Heart right ventricle (tissue), 16 donors: ENCODE measurements at regions of chr9 and their contacts with region 1.

Region 1: GRCh38 chr9:20832775-20833174 is 148.7 kb downstream of the FOCAD start:
- DNase-seq: no peak
- ATAC-seq: no peak
- H3K4me3 ChIP-seq: no peak overlapping the region
- H3K27ac ChIP-seq: no peak overlapping the region
- H3K4me1 ChIP-seq: peaks cover 0 to 12% (median 0%) of the 10 kb centered on the region in 9 donors
- H3K27me3 ChIP-seq: no peaks in the 10 kb centered on the region
- CTCF ChIP-seq: no peak

Region 2: DNA sequence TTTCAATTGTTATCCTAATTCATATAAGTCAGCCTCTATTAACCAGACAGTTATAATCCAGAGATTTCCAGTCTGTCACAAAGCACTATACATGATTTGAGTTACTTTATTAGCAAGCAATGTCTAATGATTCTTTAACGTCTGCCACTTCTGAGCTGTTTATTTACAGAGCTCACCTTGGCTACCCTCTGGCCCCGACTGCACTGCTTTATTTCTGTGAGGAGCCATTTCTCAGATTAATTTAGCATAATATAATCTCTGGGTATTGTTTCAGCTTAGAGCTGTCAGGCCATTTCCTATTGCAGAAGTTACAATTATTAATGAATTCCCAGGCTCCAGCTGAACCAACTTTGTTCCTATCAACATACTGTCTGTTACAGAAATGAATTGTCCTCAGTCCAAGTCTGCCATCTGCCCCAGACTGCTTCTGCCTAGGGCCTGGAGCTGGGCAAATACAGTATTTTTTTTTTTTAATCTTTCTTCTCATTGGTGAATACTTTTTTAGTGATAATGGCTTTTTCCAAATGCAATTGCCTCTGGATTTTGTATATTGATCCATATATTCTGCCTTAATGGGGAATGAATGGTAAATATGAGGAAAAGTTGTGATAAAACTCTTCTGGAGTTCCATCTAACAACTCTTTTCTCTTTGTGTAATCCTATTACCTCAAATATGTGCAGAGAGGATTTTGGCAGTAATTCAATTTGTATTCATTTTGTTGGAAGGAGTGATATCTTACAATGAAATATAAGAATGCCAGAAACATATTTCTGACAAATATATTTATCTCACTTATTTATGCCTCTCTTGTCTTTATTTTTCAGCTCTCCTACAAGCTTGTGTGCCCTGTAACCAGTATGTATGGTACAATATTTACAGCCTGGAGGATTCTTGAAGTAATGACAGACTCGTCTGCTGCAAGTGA is 44.0 kb before region 1 on chr9:
- intact Hi-C with region 1: loop called in 1 of 10 experiments (anchors 5 kb)
- DNase-seq: no peak
- ATAC-seq: peak in 2 of 8 donors; percentile 51 to 54
- H3K4me3 ChIP-seq: no peak overlapping the region
- H3K27ac ChIP-seq: no peak overlapping the region
- H3K4me1 ChIP-seq: peaks cover 0 to 13% (median 5%) of the 10 kb centered on the region in 9 donors
- H3K27me3 ChIP-seq: no peaks in the 10 kb centered on the region
- CTCF ChIP-seq: no peak